BJ (cell line): ENCODE measurements at regions of chr11 and their contacts with region 1.

Region 1: GRCh38 chr11:66311965-66312548 is 4.8 kb downstream of the CD248 start:
- DNase-seq: no peak
- H3K4me3 ChIP-seq: peak overlapping the region; percentile 35
- H3K27me3 ChIP-seq: peaks cover 3% of the 10 kb centered on the region; the same call in 1 of the 2 replicates
- CTCF ChIP-seq: no peak; the same call in 1 of the 2 replicates

Region 2: DNA sequence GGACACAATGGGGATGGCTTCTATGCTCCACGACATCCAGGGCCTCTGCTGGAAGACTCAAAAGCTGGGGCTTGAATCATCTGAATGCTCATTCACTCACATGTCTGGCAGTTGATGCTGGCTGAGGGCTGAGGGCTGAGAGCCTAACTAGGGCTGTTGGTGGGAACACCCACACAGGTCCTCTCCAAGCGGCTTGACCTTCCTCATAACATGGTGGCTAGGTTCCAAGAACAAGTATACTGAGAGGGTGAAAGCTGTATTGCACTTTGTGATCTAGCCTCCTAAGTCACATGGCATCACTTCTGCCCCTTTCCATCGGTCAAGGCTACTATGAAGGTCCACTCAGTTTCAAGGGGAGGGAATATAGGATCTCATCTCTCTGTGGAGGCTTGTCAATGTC is 12.9 kb before region 1 on chr11:
- CTCF ChIA-PET with region 1: interaction called, 14 read pairs
- POLR2A ChIA-PET with region 1: no interaction called
- DNase-seq: no peak
- H3K4me3 ChIP-seq: no peak overlapping the region
- H3K27me3 ChIP-seq: peaks cover 2% of the 10 kb centered on the region
- CTCF ChIP-seq: no peak

Region 3: DNA sequence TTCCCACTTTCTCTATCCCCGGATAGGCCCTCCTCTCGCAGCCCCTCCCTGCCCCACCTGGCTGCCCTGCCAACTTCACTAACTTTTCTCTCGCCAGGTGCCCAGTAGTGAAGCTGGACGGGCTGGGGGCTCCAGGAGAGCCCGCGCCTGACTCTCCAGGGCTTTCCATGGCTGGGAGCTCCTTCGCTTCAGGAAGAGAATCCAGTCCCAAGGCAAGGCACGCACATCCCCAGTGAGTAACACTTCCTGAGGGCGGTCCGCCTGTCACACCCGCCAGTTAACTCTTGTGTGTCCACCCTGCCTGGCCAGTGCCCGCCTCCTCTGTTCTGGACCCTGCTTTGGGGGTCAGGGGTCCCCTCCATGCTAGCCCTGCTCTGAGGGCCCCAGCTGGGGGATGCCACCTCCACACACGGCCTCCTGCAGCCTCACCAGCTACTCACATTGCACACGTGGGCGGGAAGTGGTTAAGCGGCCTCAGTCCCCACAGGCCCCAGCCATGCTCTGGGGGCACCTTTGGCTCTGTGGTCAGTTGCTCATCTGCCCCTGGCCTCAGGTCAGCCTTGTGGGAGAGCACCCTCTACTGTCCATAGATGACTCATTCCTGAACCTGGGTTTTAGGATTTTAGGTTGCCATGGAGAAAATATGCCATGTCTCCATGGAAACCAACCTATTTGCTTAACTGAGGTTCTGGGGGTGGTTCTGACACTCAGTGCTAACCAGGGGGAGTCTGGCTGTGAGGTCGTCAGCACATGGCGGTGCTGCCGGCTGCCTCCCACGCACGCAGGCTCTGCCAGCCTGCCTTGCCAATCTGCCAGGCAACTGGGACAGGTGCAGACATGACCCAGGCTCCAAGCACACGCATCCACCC is 24.4 kb after region 1 on chr11 and contains the start of gene RIN1:
- CTCF ChIA-PET with region 1: interaction called, 201 read pairs
- POLR2A ChIA-PET with region 1: interaction called, 34 read pairs
- DNase-seq: peak; percentile 93
- H3K4me3 ChIP-seq: peak within 1 kb of the TSS; percentile 78
- H3K27me3 ChIP-seq: no peaks in the 10 kb centered on the region
- CTCF ChIP-seq: peak; percentile 39
- polyA plus RNA-seq, gene RIN1: 6.3 and 9.2 TPM in 2 replicates

Region 4: DNA sequence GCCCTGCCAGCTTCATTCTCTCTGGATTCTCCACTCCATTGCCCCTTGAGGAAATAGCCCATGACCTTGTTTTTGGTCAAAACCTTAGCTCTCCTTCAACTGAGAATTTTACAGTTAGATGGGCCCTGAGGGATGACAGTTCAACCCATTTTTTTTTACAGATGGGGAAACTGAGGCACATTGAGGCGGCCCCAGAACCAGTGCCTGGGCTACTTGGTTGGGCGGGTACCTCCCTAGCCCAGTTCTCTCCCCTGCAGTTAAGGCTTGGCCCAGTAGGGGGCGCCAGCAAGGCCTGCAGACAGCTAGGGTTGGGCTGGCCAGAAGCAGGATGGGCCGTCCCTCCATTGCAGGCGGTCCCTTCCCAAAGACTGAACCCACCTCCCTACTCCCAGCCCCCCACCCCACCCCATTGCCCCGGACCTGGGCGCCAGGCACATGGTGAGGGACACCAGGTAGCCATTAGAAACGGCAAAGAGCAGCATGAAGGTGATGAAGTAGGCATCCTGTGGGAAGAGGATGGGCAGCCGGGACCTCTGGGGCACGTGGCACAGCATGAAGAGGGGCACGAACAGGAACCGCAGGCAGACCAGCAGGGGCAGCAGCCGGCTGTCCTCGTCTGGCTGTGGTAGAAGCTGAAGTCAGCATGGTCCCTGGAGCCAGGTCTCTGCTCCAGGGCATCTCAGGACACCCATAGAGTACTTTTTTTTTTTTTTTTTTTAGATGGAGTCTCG is 51.9 kb after region 1 on chr11:
- CTCF ChIA-PET with region 1: interaction called, 11 read pairs
- POLR2A ChIA-PET with region 1: no interaction called
- DNase-seq: no peak
- H3K4me3 ChIP-seq: no peak overlapping the region
- H3K27me3 ChIP-seq: no peaks in the 10 kb centered on the region
- CTCF ChIP-seq: peak; percentile 73